Activated CD4-positive, alpha-beta memory T cell treated with anti-CD3 and anti-CD28 coated beads for 36 hours (primary cell): ENCODE measurements at regions of chr7 and their contacts with region 1.

Region 1: DNA sequence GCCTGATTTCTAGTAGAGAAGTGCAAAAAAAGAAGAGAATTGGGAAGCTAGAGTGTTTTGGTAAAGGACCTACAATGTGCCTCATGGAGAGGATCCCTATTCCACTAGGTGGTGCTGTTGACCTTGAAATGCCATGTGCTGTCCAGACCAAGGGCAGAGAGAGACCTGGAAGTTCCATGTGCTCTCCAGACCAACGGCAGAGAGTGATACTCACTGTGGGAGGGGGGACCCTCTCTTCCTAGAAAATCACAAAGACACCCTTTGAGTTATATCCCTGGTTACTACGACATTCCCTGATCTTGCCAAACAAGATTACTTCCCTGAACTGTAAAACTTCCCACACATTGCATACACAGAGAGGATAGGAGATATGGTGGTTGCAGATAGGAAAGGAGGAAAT is 212.7 kb upstream of the ZNF804B start:
- DNase-seq: peak; percentile 20
- H3K4me3 Mint-ChIP-seq: no peak overlapping the region
- H3K27ac Mint-ChIP-seq: no peak overlapping the region
- H3K4me1 Mint-ChIP-seq: no peaks in the 10 kb centered on the region
- H3K27me3 Mint-ChIP-seq: no peaks in the 10 kb centered on the region

Region 2: GRCh38 chr7:88759230-88760135 is 212.7 kb after region 1 on chr7 and contains the start of gene ZNF804B:
- CTCF ChIA-PET with region 1: no interaction called
- POLR2A ChIA-PET with region 1: no interaction called
- intact Hi-C with region 1: loop called (anchors 10 kb)
- DNase-seq: peak; percentile 13
- H3K4me3 Mint-ChIP-seq: no peak within 1 kb of the TSS
- H3K27ac Mint-ChIP-seq: no peak within 1 kb of the TSS
- H3K4me1 Mint-ChIP-seq: peaks cover 9% of the 10 kb centered on the region
- H3K27me3 Mint-ChIP-seq: peaks cover 31% of the 10 kb centered on the region
- total RNA-seq, gene ZNF804B: not detected

Region 3: DNA sequence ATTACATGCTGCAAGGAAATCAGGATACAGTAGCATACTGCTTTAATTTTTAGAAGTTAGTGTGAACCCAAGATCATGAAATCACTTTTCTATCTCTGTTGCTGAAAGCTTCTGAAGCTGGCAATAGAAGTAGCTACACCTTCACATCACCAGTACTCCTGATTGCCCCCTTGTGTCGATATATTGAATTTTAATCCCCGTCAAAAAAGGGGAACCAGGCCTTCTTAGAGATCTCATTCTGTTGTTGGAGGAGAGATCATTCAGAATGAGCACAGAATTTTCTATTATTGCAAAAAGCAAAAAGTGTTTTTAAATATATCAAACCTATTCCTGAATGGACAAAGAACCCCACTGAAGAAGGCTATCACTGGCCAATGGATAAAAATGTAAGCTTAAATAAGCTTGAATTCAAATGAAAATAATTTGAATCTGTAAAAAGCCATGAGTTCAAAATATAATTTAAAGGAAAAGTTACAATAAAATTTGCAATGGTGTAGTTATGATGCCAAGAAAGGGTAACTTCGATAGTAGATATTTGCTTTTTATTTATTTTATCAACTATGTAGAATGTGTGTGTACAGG is 288.4 kb after region 1 on chr7:
- CTCF ChIA-PET with region 1: no interaction called
- POLR2A ChIA-PET with region 1: no interaction called
- intact Hi-C with region 1: loop called (anchors 2 kb)
- DNase-seq: no peak
- H3K4me3 Mint-ChIP-seq: no peak overlapping the region
- H3K27ac Mint-ChIP-seq: no peak overlapping the region
- H3K4me1 Mint-ChIP-seq: no peaks in the 10 kb centered on the region
- H3K27me3 Mint-ChIP-seq: no peaks in the 10 kb centered on the region